HepG2 (cell line): ENCODE measurements at regions of chr11 and their contacts with region 1.

Region 1: DNA sequence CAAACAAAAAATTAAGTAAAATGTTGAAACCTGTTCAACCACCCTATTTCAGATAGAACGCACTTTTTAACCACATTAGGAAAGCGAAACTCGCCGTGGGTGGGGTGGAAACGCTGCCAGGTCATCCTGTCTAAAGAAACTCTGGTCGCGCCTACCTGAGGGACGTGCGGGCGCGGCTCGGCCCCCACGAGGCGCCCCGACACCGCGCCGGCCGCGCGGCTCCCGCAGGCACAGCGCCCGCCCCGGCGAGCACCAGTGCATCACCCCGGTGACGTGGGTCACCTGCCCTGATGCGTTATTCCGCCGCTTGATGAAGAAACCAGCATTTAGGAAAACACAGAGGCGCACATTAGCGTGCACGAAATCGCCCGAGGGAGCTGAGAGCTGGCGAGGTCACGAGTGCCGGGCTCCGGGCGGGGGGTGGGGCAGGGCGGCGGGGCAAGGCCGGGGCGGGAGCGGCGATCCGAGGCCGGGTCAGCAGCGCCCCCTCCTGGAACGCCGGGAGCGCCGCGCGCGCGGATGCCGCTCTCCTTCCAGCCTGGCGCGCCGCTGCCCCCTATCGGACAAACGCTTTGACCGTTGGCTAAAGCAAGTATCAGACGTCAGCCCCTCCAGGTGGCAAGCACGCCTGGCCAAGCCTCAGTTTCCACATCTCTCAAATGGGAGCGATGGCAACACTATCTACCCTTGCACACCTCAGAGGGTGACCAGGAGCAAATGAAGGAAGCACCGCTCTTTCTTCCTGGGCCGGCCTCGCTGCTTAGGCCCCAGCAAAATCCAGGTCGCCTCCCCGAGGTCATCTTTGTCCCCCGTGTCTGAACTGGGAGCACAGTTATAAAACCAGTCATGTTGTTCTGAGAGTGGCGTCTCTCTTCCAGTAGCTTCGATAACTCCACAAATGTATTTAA is 15.7 kb upstream of the SNX32 start:
- DNase-seq: peak; percentile 71
- ATAC-seq: peak; percentile 80
- H3K4me3 ChIP-seq: peak overlapping the region; percentile 51 to 76 (median 63)
- H3K27ac ChIP-seq: no peak overlapping the region
- H3K4me1 ChIP-seq: peaks cover 30% of the 10 kb centered on the region
- H3K27me3 ChIP-seq: 0 out of 5 replicates have a peak, but pooled peaks cover 0 to 4% of the 10 kb centered on the region in 2 experiments
- CTCF ChIP-seq: peak; percentile 95
- EP300 ChIP-seq: no peak
- POLR2A ChIP-seq: 0 out of 4 replicates have a peak, but pooled peaks of 1 of the 2 experiments have one; percentile 30
- RAD21 ChIP-seq: peak; percentile 98

Region 2: GRCh38 chr11:65773784-65774411 is 44.2 kb before region 1 on chr11:
- CTCF ChIA-PET with region 1: interaction called, 56 read pairs
- POLR2A ChIA-PET with region 1: interaction called, 4 read pairs
- in situ Hi-C with region 1: no loop called
- intact Hi-C with region 1: no loop called
- DNase-seq: no peak
- ATAC-seq: no peak
- H3K4me3 ChIP-seq: no peak overlapping the region
- H3K27ac ChIP-seq: no peak overlapping the region
- H3K4me1 ChIP-seq: peaks cover 38% of the 10 kb centered on the region
- H3K27me3 ChIP-seq: no peaks in the 10 kb centered on the region
- CTCF ChIP-seq: peak; percentile 45
- EP300 ChIP-seq: no peak
- POLR2A ChIP-seq: no peak
- RAD21 ChIP-seq: no peak

Region 3: DNA sequence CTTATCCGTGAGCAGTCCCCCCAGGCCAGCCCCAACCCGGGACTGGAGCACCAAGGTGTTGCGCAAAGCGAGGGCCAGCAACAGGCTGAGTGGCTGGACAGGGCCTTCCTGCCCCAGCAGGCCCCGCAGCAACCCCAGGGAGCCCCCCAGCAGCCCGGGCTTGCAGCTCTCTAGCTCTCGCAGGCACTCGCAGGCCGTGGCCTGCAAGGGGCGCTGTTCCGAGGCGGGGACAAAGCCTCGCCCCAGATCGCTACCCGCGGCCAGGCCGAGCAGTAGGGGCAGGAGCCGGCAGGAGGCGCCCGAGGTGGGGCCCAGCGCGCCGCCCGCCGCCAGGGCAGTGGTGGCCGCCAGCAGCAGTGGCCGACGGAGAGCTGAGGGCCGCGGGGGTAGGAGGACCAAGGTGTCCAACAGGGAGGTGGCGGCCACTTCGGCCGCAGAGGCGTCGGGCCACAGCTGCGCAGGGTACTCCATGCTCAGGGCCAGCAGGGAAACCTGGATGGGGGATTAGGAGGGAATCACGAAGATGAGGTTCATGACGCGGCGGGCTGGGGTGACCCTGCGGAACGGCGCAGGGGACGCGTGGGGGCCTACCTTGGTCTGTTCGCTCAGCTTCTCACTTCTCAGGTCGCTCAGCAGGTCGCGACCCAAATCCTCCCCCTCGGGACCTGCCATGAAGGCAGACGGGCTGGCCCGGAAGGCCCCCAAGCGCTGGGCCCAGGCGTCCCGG is 38.1 kb before region 1 on chr11:
- CTCF ChIA-PET with region 1: interaction called, 56 read pairs
- POLR2A ChIA-PET with region 1: interaction called, 10 read pairs
- in situ Hi-C with region 1: loop called (anchors 5 kb)
- intact Hi-C with region 1: loop called (anchors 5 kb)
- DNase-seq: peak; percentile 53
- ATAC-seq: peak; percentile 74
- H3K4me3 ChIP-seq: peak overlapping the region; percentile 59 to 92 (median 62)
- H3K27ac ChIP-seq: peak overlapping the region; percentile 61
- H3K4me1 ChIP-seq: peaks cover 43% of the 10 kb centered on the region
- H3K27me3 ChIP-seq: peaks cover 1 to 28% of the 10 kb centered on the region in 2 experiments; a peak in 4 of 5 replicates
- CTCF ChIP-seq: peak; percentile 80
- EP300 ChIP-seq: no peak
- POLR2A ChIP-seq: peak in 1 of 2 experiments; percentile 19; a peak in 1 of 4 replicates
- RAD21 ChIP-seq: peak; percentile 80

Region 4: DNA sequence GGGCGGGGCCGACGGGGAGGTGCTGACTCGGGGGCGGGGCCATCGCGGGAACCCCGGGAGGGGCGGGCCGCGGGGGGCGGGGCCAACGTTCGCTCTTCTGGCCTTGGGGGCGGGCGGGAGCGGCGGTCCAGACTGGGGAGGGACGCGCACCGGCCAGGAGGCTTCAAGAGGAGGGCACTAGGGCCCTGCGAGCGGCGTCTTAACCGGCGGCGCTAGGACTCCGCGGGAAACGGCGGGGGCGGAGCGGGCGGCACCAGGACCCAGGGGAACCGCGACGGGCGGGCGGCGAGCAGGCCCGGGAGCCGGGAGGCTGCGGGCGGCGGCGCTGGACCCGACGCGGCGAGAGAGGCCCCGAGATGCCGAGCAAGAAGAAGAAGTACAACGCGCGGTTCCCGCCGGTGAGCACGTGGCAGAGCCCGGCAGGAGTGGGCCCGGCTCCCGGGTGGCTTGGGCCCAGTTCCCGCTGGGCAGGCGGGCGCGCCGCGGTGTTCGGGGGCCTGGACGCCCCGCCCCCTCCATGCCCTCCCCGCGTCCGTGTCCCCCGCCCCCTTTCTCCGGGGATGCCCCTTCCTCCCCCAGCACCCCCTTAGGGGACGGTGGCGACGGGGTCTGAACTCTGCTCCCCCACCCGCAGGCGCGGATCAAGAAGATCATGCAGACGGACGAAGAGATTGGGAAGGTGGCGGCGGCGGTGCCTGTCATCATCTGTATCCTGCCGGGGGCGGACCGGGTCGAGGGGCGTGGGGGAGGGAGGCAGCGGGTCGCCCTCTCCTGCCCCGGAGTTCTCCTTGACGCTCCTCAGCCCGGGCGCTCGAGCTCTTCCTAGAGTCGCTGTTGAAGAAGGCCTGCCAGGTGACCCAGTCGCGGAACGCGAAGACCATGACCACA is 101.3 kb after region 1 on chr11 and contains the start of gene DRAP1:
- CTCF ChIA-PET with region 1: no interaction called
- POLR2A ChIA-PET with region 1: no interaction called
- in situ Hi-C with region 1: no loop called
- intact Hi-C with region 1: no loop called
- DNase-seq: peak; percentile 94
- ATAC-seq: peak; percentile 89
- H3K4me3 ChIP-seq: peak within 1 kb of the TSS; percentile 88 to 98 (median 92)
- H3K27ac ChIP-seq: peak within 1 kb of the TSS; percentile 75
- H3K4me1 ChIP-seq: peaks cover 46% of the 10 kb centered on the region
- H3K27me3 ChIP-seq: no peaks in the 10 kb centered on the region
- CTCF ChIP-seq: 0 out of 2 replicates have a peak, but pooled peaks have one; percentile 17
- EP300 ChIP-seq: peak in 1 of 2 experiments; percentile 36; a peak in 1 of 4 replicates
- POLR2A ChIP-seq: peak in 1 of 2 experiments; percentile 46; a peak in 2 of 4 replicates
- RAD21 ChIP-seq: peak; percentile 79
- total RNA-seq, gene DRAP1: 31.5 and 52.3 TPM in 2 replicates

Region 5: DNA sequence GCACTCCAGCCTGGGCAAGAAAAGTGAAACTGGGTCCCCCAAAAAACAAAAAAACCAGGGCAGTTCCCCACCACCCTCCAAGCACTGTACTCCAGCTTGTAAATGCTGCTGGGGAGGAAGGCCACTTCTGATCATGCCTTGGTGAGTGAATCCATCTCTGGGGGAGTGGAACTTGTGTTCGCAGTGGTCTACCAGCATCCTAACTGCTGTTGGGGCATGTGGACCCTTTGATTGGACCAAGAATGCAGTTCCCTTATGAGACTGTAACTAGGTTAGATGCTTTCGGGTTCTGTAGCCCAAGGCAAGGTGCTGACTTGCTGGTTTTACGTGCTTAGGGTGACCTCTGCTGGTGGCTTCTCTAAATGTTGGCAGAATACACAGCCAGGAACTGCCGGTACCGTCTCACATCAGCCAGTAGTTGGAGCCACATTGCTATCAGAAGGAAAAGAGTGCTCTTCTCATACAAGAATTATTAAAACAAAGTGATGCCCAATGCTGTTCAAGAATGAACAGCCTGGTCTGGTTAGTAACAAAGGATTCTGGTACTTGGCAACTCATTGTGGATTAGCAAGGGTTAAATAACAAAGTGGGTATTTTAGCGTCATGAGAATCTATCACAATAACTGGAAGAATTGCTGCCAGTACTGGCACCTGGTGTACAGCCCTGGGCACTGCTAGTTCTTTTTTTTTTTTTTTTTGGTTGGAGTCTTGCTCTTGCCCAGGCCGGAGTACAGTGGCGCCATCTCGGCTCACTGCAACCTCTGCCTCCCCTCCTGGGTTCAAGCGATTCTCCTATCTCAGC is 170.9 kb after region 1 on chr11:
- CTCF ChIA-PET with region 1: interaction called, 19 read pairs
- POLR2A ChIA-PET with region 1: no interaction called
- in situ Hi-C with region 1: no loop called
- intact Hi-C with region 1: no loop called
- DNase-seq: peak; percentile 92
- ATAC-seq: peak; percentile 98
- H3K4me3 ChIP-seq: no peak overlapping the region
- H3K27ac ChIP-seq: no peak overlapping the region
- H3K4me1 ChIP-seq: peaks cover 4% of the 10 kb centered on the region
- H3K27me3 ChIP-seq: no peaks in the 10 kb centered on the region
- CTCF ChIP-seq: peak; percentile 97
- EP300 ChIP-seq: no peak
- POLR2A ChIP-seq: no peak
- RAD21 ChIP-seq: peak; percentile 93